Mammary epithelial cell (primary cell): ENCODE measurements at regions of chr7 and their contacts with region 1.

Region 1: DNA sequence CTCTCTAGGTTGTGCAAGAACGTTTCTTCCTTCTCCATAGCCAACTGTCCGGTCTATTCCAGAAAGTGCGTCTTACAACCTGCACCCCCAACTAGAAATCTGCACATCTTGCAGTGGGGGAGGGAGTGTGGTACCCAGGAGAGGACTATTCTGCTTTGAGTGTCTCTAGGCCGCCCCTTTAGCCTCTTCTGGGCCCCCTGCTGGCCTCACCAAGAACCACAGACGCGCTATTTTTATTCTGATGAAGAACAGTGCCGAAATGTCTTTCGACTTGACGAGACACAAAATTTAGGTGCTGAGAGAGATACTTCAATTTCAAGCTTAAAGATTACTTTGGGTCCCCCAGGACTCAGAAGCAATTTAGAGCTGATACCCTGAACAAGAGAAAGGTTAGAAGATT is 1.0 kb downstream of the CNPY1 start:
- DNase-seq: no peak
- H3K4me3 ChIP-seq: no peak overlapping the region
- H3K27ac ChIP-seq: no peak overlapping the region
- H3K4me1 ChIP-seq: peaks cover 15% of the 10 kb centered on the region
- H3K27me3 ChIP-seq: peaks cover 5% of the 10 kb centered on the region
- CTCF ChIP-seq: peak; percentile 5 to 21

Region 2: GRCh38 chr7:155506854-155507337 is 38.5 kb before region 1 on chr7:
- CTCF ChIA-PET with region 1: no interaction called
- dilution Hi-C with region 1: no loop called
- in situ Hi-C with region 1: no loop called
- intact Hi-C with region 1: no loop called
- DNase-seq: peak; percentile 32
- H3K4me3 ChIP-seq: no peak overlapping the region
- H3K27ac ChIP-seq: no peak overlapping the region
- H3K4me1 ChIP-seq: no peaks in the 10 kb centered on the region
- H3K27me3 ChIP-seq: peaks cover 38% of the 10 kb centered on the region
- CTCF ChIP-seq: no peak

Region 3: DNA sequence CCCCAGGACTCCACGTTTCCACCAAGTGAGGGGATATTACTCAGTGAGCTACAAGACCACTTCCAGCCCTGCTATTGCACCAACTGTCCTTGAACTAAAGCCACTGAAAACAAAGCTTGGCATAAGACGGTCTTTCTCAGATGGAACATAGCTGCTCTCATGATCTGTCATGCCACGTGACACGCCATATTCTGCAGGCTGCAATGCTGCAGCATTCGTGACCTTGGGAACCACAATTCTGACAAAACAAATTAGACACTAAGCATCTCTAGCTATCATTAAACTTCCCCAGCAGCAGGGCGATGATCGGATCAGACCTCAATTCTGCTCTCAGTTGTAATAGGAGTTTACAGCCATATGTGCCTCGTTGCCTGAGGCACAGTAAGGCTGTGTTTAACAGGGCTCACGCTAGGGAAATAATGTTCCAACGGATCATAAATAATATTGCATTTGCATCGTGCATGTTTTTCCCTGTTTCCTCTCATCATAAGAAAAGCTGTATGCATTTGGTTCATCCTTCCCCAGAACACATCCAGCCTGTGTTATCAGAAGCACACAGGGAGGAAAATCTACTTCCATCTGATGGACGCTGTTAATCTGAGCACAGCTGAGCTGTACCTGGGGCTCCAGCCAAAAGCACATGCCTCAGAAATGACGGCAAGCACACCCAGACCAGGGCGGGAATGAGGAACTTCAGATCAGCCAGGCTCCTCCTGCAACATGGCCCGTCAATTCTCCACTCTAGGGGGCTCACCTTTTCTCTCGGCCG is 39.6 kb after region 1 on chr7:
- CTCF ChIA-PET with region 1: no interaction called
- dilution Hi-C with region 1: no loop called
- in situ Hi-C with region 1: no loop called
- intact Hi-C with region 1: loop called (anchors 2 kb)
- DNase-seq: no peak
- H3K4me3 ChIP-seq: no peak overlapping the region
- H3K27ac ChIP-seq: no peak overlapping the region
- H3K4me1 ChIP-seq: peaks cover 21% of the 10 kb centered on the region
- H3K27me3 ChIP-seq: no peaks in the 10 kb centered on the region
- CTCF ChIP-seq: no peak

Region 4: DNA sequence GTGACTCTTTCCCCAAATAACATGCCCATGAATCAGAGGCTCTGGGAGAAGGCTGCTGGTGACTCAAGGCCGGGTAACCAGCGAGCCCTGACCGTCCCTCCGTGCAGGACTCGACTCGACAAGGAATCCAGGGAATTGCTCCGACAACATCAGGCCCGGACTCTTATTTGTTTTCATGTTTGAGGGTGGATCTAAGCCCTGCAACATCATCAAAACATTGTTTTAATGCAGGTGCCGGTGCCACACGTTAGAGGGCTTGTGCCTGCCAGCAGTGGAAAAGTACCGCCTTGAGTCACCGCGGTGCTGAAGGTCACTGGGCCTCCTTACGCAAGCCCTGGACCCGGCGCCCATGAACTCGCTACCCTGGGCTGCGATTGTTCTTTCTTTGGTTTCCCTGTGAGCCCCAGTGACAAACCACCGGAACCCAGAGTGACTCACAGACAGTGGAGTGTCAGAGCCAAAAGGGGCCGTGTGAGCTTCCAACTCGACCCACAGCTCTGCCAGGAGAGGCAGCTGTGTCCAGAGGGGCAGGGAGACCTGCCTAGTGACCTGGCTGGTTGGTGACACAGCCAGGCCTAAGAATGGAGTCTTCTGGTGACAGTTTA is 406.3 kb after region 1 on chr7:
- CTCF ChIA-PET with region 1: no interaction called
- dilution Hi-C with region 1: no loop called
- in situ Hi-C with region 1: no loop called
- intact Hi-C with region 1: no loop called
- DNase-seq: peak; percentile 93
- H3K4me3 ChIP-seq: peak overlapping the region in 1 of 3 experiments; percentile 19
- H3K27ac ChIP-seq: peak overlapping the region; percentile 77
- H3K4me1 ChIP-seq: peaks cover 26% of the 10 kb centered on the region
- H3K27me3 ChIP-seq: no peaks in the 10 kb centered on the region
- CTCF ChIP-seq: no peak